ENCODE measurements at regions of chr12 and their contacts with region 1.

Region 1: GRCh38 chr12:106357549-106358395 is at the start of gene POLR3B:
- DNase-seq: peak; percentile 97
- H3K4me3 Mint-ChIP-seq: peak within 1 kb of the TSS; percentile 87
- H3K27ac Mint-ChIP-seq: peak within 1 kb of the TSS; percentile 92
- H3K4me1 Mint-ChIP-seq: peaks cover 18% of the 10 kb centered on the region
- H3K27me3 Mint-ChIP-seq: no peaks in the 10 kb centered on the region
- total RNA-seq, gene POLR3B: 5.3 to 6.1 TPM

Region 2: GRCh38 chr12:106369607-106370346 is 12.0 kb after region 1 on chr12:
- CTCF ChIA-PET with region 1: interaction called, 10 read pairs
- POLR2A ChIA-PET with region 1: no interaction called
- DNase-seq: no peak
- H3K4me3 Mint-ChIP-seq: no peak overlapping the region
- H3K27ac Mint-ChIP-seq: no peak overlapping the region
- H3K4me1 Mint-ChIP-seq: no peaks in the 10 kb centered on the region
- H3K27me3 Mint-ChIP-seq: no peaks in the 10 kb centered on the region

Region 3: GRCh38 chr12:106378788-106379187 is 21.0 kb after region 1 on chr12:
- CTCF ChIA-PET with region 1: interaction called, 19 read pairs
- POLR2A ChIA-PET with region 1: no interaction called
- DNase-seq: no peak
- H3K4me3 Mint-ChIP-seq: no peak overlapping the region
- H3K27ac Mint-ChIP-seq: peak overlapping the region; percentile 20
- H3K4me1 Mint-ChIP-seq: peaks cover 24% of the 10 kb centered on the region
- H3K27me3 Mint-ChIP-seq: no peaks in the 10 kb centered on the region

Measured in activated CD4-positive, alpha-beta T cell treated with anti-CD3 and anti-CD28 coated beads, Interleukin-2, amount 10 ng/mL, durations not matched to agents 7 days and 5 days (primary cell).